GM23248 (cell line): ENCODE measurements at regions of chr3 and their contacts with region 1.

Region 1: GRCh38 chr3:116770815-116771450 is 61.4 kb downstream of the TUSC7 start:
- DNase-seq: peak; percentile 85
- H3K4me3 ChIP-seq: no peak overlapping the region
- H3K27ac ChIP-seq: no peak overlapping the region
- H3K4me1 ChIP-seq: no peaks in the 10 kb centered on the region
- H3K27me3 ChIP-seq: no peaks in the 10 kb centered on the region

Region 2: GRCh38 chr3:116140100-116140689 is 630.7 kb before region 1 on chr3:
- in situ Hi-C with region 1: loop called (anchors 25 kb)
- DNase-seq: peak; percentile 68
- H3K4me3 ChIP-seq: no peak overlapping the region
- H3K27ac ChIP-seq: no peak overlapping the region
- H3K4me1 ChIP-seq: 0 out of 2 replicates have a peak, but pooled peaks cover 4% of the 10 kb centered on the region
- H3K27me3 ChIP-seq: no peaks in the 10 kb centered on the region

Region 3: GRCh38 chr3:116647960-116648359 is 123.0 kb before region 1 on chr3:
- in situ Hi-C with region 1: no loop called
- DNase-seq: no peak
- H3K4me3 ChIP-seq: no peak overlapping the region
- H3K27ac ChIP-seq: no peak overlapping the region
- H3K4me1 ChIP-seq: no peaks in the 10 kb centered on the region
- H3K27me3 ChIP-seq: no peaks in the 10 kb centered on the region